ENCODE measurements at regions of chr3 and their contacts with region 1.

Region 1: DNA sequence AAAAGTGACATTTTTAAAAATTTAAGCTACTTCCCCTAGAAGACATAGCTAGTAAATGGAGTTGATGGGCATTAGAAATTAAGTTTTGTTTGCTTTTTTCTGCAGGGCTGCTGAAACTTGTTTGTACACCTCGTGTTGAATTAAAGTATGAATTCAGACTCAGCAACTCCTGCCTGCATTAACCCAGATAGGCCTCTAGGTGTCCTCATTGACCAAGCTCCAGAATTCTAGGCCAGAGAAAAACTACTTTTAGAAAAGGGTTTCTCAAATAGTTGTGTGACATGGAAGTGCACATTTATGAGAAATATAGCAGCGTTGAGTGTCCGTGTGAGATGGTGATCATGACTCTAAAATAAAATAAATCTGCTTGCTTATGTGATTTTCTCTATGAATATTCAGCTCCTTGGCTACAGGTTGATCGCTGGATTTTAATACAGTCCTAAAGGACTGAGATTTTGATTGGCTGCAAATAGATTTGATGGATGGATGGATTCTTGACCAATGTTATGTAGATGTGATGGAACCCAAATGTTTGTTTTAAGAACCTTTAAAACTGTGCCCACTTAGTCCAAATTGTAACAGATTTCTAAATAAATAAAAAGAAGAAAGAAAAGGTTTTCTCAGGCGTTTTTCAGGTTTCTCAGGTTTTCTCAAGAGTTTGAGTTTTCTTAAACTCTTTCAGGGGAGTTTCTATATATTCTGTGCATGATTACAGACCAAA is 39.4 kb upstream of the LMOD3 start:
- DNase-seq: peak; percentile 32
- H3K4me3 Mint-ChIP-seq: no peak overlapping the region
- H3K27ac Mint-ChIP-seq: no peak overlapping the region
- H3K4me1 Mint-ChIP-seq: peaks cover 7% of the 10 kb centered on the region
- H3K27me3 Mint-ChIP-seq: no peaks in the 10 kb centered on the region
- CTCF ChIP-seq: peak; percentile 72

Region 2: DNA sequence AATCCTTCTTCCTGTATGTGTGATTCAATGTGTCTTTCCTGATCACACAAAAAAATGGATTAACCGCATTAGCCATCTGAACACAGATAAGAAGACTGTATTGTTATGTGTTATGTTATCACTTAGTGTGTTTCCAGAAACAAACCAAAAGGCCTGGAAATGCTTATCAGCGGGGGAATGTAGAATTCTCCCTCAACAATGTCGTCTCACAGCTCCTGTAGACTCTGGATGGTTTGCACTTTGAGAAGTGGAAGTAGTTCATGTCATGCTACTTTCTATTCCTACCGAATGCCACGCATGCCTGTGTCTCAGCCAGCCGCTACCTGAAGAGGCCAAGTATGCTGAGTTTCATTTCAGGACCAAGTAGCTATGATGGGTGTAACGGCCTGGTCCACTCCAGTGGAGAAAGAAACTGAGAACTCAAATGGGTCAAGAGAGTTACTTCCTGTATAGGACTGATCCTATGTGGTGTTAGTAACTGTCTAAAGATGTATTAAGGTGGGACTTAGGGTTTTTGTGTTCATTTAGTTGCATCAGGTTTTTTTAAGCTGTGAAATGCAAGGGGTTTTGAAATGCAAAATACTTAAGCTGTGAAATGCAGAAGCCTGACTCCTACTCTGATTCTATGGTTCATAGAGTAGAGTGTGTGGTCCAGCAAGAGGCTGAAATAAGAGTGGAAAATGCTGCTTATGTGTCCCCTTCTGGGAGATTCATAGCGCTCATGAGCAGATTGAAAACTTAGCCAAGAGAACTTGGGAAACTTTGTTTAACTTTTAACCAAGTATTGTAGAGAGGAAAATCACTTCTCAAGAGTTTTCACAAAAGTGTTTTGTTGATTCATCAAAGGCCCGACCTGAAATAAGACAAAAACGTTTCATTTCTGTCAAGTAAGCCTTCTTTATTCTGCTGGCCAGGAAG is 79.2 kb after region 1 on chr3:
- CTCF ChIA-PET with region 1: interaction called, 4 read pairs
- intact Hi-C with region 1: loop called (anchors 5 kb)
- DNase-seq: no peak
- H3K4me3 Mint-ChIP-seq: no peak overlapping the region
- H3K27ac Mint-ChIP-seq: peak overlapping the region; percentile 36
- H3K4me1 Mint-ChIP-seq: peaks cover 26% of the 10 kb centered on the region
- H3K27me3 Mint-ChIP-seq: no peaks in the 10 kb centered on the region
- CTCF ChIP-seq: no peak

Region 3: DNA sequence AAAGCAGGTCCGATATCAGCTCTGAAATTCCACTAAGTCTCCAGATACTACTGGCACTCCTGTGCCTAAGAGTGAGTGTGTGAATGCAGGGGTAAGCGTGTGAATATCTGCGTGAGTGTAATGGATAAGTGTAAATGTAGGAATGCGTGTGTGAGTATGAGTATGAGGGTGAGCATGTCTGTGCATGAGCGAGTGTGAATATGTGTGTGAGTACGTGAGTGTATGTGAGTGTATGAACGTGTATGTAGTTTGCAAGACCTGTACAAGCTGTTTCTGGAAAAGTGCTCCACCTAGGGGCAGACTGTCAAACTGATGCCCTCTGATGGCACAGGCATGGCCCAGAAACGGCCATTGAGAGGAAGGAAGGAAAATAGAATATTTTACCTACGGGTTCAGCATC is 248.5 kb after region 1 on chr3:
- CTCF ChIA-PET with region 1: interaction called, 5 read pairs
- intact Hi-C with region 1: loop called (anchors 5 kb)
- DNase-seq: peak; percentile 78
- H3K4me3 Mint-ChIP-seq: no peak overlapping the region
- H3K27ac Mint-ChIP-seq: no peak overlapping the region
- H3K4me1 Mint-ChIP-seq: peaks cover 9% of the 10 kb centered on the region
- H3K27me3 Mint-ChIP-seq: no peaks in the 10 kb centered on the region
- CTCF ChIP-seq: peak; percentile 63

Region 4: DNA sequence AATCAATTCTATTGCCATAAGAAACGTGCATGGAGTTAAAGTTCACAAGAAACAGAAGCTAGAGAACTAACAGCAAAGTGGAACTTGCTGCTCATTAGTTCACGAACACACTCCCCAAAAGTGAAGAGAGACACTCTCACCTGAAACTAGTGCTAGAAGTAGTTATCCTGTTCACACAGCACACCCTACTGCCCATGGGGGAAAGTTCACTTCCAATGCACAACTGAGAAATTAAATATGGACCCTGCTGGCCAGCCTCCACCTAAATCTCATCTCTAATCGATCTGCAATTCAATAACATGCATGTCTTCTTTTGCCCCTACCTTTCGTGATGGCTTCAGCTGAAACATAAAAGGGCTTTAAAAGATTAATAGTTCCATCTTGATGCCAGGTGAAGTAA is 263.5 kb after region 1 on chr3:
- CTCF ChIA-PET with region 1: interaction called, 4 read pairs
- intact Hi-C with region 1: loop called (anchors 1 kb)
- DNase-seq: peak; percentile 50
- H3K4me3 Mint-ChIP-seq: no peak overlapping the region
- H3K27ac Mint-ChIP-seq: no peak overlapping the region
- H3K4me1 Mint-ChIP-seq: peaks cover 7% of the 10 kb centered on the region
- H3K27me3 Mint-ChIP-seq: no peaks in the 10 kb centered on the region
- CTCF ChIP-seq: peak; percentile 43

Region 5: GRCh38 chr3:69665026-69665737 is 503.4 kb after region 1 on chr3:
- CTCF ChIA-PET with region 1: no interaction called
- intact Hi-C with region 1: loop called (anchors 5 kb)
- DNase-seq: peak; percentile 56
- H3K4me3 Mint-ChIP-seq: no peak overlapping the region
- H3K27ac Mint-ChIP-seq: peak overlapping the region; percentile 74
- H3K4me1 Mint-ChIP-seq: peaks cover 39% of the 10 kb centered on the region
- H3K27me3 Mint-ChIP-seq: no peaks in the 10 kb centered on the region
- CTCF ChIP-seq: no peak

Measured in Calu3 (cell line).